ENCODE measurements at regions of chr11 and their contacts with region 1.

Region 1: DNA sequence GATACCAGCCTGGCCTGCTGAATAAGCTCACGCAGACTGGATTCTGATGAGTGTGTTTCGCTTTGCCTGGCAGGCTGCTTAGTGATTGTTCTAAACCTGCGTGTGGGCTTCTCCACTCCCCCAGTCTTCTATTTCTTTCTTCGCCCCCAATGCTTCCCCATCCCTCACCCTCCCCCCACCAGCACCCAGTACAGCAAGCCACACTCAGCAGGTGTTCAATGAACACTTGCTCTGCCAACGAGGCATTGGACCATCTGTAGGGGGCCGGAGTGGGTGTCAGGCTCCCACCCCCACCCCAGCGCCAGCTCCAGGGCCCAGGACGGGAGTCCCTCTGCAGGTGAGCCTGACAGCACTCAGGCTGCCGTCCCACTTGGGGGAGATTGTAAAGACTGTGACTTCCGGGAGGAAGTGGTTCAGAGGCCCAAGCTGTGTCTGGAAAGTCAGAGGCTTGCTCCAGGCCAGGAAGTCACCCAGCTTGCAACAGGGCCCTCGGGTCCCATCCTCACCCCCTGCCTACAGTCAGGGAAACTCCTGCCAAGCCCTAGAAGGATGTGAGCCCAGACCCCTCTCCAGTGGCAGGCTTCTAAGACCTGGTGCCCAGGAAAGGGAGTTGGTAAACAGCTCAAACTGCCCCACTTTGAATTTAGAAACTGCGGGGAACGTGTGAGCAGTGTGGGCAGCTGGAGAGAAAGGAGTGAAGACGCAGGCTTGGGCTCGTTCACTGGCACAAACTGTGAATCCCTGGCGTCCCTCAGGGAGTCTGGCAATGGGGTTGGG is 66.3 kb upstream of the PRDM11 start:
- DNase-seq: peak; percentile 83
- ATAC-seq: peak; percentile 94
- H3K4me3 Mint-ChIP-seq: no peak overlapping the region
- H3K27ac Mint-ChIP-seq: peak overlapping the region; percentile 88
- H3K4me1 Mint-ChIP-seq: peaks cover 51% of the 10 kb centered on the region
- H3K27me3 Mint-ChIP-seq: no peaks in the 10 kb centered on the region

Region 2: DNA sequence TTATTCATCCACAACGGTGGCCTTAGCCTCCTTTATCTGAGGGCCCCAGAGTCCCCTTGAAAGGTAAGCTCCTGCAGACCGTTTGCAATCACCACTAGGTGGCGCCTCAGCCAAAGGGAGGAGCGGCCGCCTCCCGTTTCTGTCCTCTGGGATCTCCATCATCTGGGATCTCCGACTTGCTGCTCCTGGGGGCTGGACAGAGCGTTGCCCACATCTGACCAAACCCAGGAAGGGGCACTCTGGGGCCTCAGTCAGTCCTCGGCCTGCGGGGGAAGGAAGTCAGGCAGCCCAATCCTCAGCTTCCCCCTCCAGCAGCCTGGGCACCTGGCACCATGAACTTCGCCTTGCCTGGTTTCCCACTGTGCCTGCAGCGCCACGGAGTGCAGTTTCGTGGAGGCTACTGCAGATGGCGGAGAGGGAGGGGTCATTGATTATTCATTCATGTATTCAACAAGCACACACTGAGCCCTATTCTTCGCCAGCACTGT is 152.9 kb before region 1 on chr11:
- CTCF ChIA-PET with region 1: interaction called, 12 read pairs
- DNase-seq: peak; percentile 63
- ATAC-seq: peak; percentile 71
- H3K4me3 Mint-ChIP-seq: no peak overlapping the region
- H3K27ac Mint-ChIP-seq: no peak overlapping the region
- H3K4me1 Mint-ChIP-seq: no peaks in the 10 kb centered on the region
- H3K27me3 Mint-ChIP-seq: no peaks in the 10 kb centered on the region

Region 3: DNA sequence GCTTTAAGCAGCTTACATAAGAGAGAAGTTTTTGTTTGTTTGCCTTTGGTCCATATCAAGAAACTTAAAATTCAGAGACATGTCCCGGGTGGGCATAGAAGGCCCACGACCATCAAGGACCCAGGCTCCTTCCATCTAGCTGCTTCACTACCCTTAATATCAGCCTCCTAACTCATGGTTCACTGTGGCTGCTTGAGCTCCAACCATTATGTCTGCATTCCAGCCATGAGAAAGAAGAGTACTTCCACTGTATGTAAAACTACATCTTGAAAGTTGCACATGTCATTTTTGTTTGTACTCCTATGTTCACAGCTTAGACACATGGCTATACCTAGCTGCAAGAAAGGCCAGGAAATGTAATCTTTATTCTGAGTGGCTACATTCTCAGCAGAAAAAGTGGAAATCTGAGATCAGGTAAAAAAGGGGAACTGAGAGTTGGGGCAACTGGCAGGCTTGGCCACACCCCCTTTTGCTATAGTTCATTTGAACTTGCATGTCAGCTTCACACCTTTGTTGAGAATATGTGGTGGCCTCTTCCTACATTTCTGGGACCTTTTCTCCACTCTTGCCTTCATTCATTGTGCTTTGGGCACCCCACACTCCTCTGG is 48.1 kb before region 1 on chr11:
- CTCF ChIA-PET with region 1: no interaction called
- DNase-seq: no peak
- ATAC-seq: no peak
- H3K4me3 Mint-ChIP-seq: no peak overlapping the region
- H3K27ac Mint-ChIP-seq: no peak overlapping the region
- H3K4me1 Mint-ChIP-seq: no peaks in the 10 kb centered on the region
- H3K27me3 Mint-ChIP-seq: peaks cover 12% of the 10 kb centered on the region

Region 4: GRCh38 chr11:45339729-45340519 is 259.8 kb after region 1 on chr11:
- CTCF ChIA-PET with region 1: no interaction called
- DNase-seq: peak; percentile 94
- ATAC-seq: peak; percentile 100
- H3K4me3 Mint-ChIP-seq: peak overlapping the region; percentile 51
- H3K27ac Mint-ChIP-seq: no peak overlapping the region
- H3K4me1 Mint-ChIP-seq: peaks cover 8% of the 10 kb centered on the region
- H3K27me3 Mint-ChIP-seq: peaks cover 33% of the 10 kb centered on the region